ENCODE measurements at regions of chr3 and their contacts with region 1.

Region 1: DNA sequence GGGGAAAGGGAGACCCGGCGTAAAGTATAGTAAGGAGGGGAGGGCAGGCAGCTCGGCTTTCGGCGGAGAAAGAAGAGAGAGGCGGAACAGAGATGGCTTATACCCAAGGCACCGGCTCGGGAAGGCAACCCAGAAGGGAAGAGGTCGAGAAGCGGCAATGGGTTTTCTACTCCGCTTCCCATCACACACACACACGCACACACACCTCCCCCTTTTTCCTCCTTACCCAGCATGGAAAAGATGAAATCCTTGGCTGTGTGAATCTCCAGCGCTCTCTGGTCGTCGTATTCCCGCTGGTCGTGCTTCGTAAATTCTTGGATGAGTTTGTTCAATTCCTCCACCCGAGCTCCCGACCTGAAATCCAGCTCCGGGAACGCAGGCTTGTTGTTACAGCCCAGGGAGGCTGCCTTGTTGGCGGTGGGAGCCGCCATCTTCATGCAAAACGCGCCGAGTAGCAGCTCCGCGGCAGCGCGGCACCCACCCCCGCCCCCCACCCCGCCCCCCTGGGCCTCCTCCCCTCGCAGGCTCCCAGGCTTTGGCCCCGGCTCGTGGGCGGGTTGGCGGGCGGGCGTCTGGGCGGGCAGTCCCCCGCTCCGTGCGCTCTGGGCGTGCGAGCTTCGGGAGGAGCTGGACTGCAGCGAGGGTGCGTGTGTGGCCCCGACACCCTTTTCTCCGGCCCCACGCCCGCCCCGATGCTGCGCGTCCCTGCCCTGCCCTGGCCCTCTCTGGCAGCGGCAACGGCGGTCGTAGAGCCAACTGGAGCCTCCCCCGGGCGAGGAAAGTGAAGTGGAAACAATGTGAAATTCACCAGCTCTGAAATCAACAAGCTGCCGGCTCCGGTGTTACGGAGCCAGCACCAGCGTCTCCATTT is at the start of gene MB21D2:
- DNase-seq: peak; percentile 18 to 83 (median 43)
- ATAC-seq: peak; percentile 68
- H3K4me3 ChIP-seq: peak within 1 kb of the TSS; percentile 87
- H3K4me3 Mint-ChIP-seq: peak within 1 kb of the TSS; percentile 95
- H3K27ac ChIP-seq: peak within 1 kb of the TSS; percentile 40 to 51
- H3K27ac Mint-ChIP-seq: peak within 1 kb of the TSS; percentile 85
- H3K4me1 ChIP-seq: peaks cover 30% of the 10 kb centered on the region
- H3K4me1 Mint-ChIP-seq: peaks cover 38% of the 10 kb centered on the region
- H3K27me3 ChIP-seq: peaks cover 11 to 20% of the 10 kb centered on the region in 2 experiments
- H3K27me3 Mint-ChIP-seq: peaks cover 70% of the 10 kb centered on the region
- CTCF ChIP-seq: no peak
- total RNA-seq, gene MB21D2: 0.77 to 0.78 TPM

Region 2: GRCh38 chr3:192090586-192090985 is 827.1 kb before region 1 on chr3:
- CTCF ChIA-PET with region 1: no interaction called
- POLR2A ChIA-PET with region 1: no interaction called
- intact Hi-C with region 1: no loop called
- DNase-seq: no peak
- ATAC-seq: no peak
- H3K4me3 ChIP-seq: no peak overlapping the region
- H3K4me3 Mint-ChIP-seq: no peak overlapping the region
- H3K27ac ChIP-seq: no peak overlapping the region
- H3K27ac Mint-ChIP-seq: no peak overlapping the region
- H3K4me1 ChIP-seq: no peaks in the 10 kb centered on the region
- H3K4me1 Mint-ChIP-seq: no peaks in the 10 kb centered on the region
- H3K27me3 ChIP-seq: no peaks in the 10 kb centered on the region
- H3K27me3 Mint-ChIP-seq: no peaks in the 10 kb centered on the region
- CTCF ChIP-seq: no peak

Region 3: DNA sequence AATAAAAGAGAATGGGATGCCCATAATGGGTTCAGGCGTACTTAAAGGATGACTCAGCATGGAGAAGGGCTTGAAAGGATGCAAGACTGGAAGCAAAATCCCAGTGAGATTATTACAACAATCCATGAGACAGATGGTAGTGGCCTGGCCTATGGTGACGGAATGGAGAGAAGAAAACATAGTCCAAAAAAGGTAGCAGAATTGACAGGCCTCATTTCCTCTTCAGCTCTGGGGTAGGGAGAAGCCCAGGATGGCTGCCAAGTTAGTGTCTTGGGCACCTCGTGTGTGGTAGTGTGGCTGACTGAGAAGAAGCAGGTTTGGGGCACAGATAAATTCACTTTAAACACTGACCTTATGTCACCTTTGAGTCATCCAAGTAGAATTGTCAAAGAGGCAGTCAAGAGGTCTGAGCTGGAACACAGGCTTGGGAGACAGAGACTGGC is 18.1 kb before region 1 on chr3:
- CTCF ChIA-PET with region 1: no interaction called
- POLR2A ChIA-PET with region 1: interaction called, 10 read pairs
- intact Hi-C with region 1: no loop called
- DNase-seq: peak in 3 of 14 experiments; percentile 17 to 37 (median 24)
- ATAC-seq: no peak
- H3K4me3 ChIP-seq: no peak overlapping the region
- H3K4me3 Mint-ChIP-seq: no peak overlapping the region
- H3K27ac ChIP-seq: no peak overlapping the region
- H3K27ac Mint-ChIP-seq: no peak overlapping the region
- H3K4me1 ChIP-seq: peaks cover 49% of the 10 kb centered on the region
- H3K4me1 Mint-ChIP-seq: peaks cover 35% of the 10 kb centered on the region
- H3K27me3 ChIP-seq: no peaks in the 10 kb centered on the region
- H3K27me3 Mint-ChIP-seq: no peaks in the 10 kb centered on the region
- CTCF ChIP-seq: no peak

Region 4: DNA sequence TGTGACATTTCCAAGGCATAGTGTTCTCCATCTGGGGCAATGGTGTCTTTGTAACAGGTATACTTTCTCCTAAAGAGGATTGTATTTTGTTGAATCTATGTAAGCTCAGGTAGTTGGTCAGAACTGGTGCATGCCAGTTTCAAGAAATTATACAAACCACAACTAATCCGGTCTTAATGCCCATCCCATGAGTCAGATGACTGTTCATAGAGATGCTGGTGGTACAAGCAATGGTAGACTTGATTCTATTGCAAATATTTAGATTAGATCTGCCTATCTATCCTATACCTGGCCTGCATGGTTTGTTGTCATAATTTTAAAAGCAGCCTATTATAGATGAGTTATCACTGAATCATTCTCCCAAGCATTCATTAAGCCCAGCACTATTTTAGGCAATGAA is 417.4 kb after region 1 on chr3:
- CTCF ChIA-PET with region 1: no interaction called
- POLR2A ChIA-PET with region 1: no interaction called
- intact Hi-C with region 1: no loop called
- DNase-seq: no peak
- ATAC-seq: no peak
- H3K4me3 ChIP-seq: no peak overlapping the region
- H3K4me3 Mint-ChIP-seq: no peak overlapping the region
- H3K27ac ChIP-seq: no peak overlapping the region
- H3K27ac Mint-ChIP-seq: no peak overlapping the region
- H3K4me1 ChIP-seq: no peaks in the 10 kb centered on the region
- H3K4me1 Mint-ChIP-seq: no peaks in the 10 kb centered on the region
- H3K27me3 ChIP-seq: no peaks in the 10 kb centered on the region
- H3K27me3 Mint-ChIP-seq: no peaks in the 10 kb centered on the region
- CTCF ChIP-seq: no peak

Measured in CD4-positive, alpha-beta T cell (primary cell).